Caco-2 (cell line): ENCODE measurements at regions of chr7 and their contacts with region 1.

Region 1: DNA sequence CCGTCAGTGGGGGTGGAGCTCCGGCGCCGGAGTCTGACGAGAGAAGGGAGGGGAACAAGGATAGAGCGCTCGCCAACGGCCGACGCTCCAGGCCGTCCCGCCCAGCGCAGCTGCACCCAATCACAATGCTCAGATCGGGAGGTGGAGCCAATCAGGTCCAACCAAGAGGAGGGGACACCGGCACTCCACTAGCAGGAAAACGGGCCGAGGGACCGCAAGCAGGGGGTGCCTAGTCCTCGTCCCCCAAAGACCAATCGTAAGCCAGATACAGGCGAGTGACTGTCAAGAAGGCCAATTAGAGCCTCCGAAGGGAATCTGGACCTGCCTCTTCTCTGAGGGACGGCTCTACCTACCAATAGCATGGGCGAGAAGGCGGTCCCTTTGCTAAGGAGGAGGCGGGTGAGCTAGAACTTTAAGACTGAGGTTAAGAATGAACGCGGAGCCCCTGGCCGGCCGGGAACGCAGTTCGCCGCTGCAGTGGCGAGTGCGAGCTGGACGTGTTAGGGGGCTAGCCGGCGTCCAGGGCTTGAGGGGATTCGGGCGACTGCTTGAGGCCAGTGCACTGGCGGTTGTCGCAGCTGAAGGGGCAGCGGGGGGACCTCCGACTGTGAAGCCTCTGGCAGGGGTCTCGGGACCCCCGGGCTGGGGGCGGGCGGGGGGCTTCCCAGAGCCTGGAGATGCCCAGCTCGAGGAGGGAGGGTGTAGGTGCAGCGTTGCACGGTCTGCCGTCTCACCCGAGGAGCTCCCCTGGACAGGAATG is at the start of gene FBXO24:
- DNase-seq: peak; percentile 100
- H3K4me3 ChIP-seq: peak within 1 kb of the TSS; percentile 74
- H3K4me3 Mint-ChIP-seq: peak within 1 kb of the TSS; percentile 86
- H3K27ac Mint-ChIP-seq: peak within 1 kb of the TSS; percentile 93
- H3K4me1 ChIP-seq: peaks cover 13% of the 10 kb centered on the region
- H3K4me1 Mint-ChIP-seq: peaks cover 11% of the 10 kb centered on the region
- H3K27me3 ChIP-seq: no peaks in the 10 kb centered on the region
- H3K27me3 Mint-ChIP-seq: no peaks in the 10 kb centered on the region
- CTCF ChIP-seq: no peak
- total RNA-seq, gene FBXO24: 1.4 and 1.5 TPM in 2 replicates

Region 2: DNA sequence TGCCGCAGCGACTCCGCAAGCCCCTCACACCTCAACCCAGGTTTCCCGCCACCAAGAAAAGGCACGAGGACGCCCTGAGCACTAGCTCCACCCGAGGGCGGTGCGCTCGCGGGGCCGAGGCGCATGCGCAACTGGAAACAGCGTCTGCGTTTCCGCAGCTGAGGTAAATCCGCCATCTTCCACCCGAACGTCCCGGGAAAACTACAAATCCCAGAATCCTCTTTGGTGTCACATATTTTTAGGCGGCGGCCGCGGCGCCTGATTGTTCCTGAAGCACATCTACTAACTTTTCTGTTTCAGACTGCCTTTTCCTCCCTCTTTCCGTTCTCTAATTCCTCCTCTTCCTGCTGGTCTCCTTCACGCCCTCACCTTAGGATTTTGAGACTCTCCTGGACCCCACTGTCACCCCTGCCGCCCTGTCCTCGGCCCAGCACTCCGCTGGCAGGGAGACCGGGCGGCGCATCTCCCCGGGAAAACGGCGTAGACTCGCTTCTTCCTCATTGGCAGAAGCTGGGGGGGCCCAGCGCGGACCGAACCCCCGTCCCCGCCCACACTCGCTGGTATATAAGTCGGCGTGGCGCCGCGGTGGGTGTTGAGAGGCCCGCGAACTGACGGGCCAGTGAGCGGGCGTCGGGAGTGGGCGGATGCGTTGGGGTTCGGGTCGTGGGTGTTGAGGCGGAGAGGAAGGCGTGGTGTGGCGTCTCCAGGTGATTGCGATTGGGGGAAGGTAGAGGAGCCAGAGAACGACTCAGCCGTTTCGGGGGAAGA is 158.1 kb before region 1 on chr7 and contains the start of gene ZCWPW1:
- CTCF ChIA-PET with region 1: no interaction called
- POLR2A ChIA-PET with region 1: interaction called, 24 read pairs
- intact Hi-C with region 1: no loop called
- DNase-seq: peak; percentile 96 to 97
- H3K4me3 ChIP-seq: peak within 1 kb of the TSS; percentile 88
- H3K4me3 Mint-ChIP-seq: peak within 1 kb of the TSS; percentile 89
- H3K27ac Mint-ChIP-seq: peak within 1 kb of the TSS; percentile 99
- H3K4me1 ChIP-seq: 0 out of 2 replicates have a peak, but pooled peaks cover 10% of the 10 kb centered on the region
- H3K4me1 Mint-ChIP-seq: peaks cover 7% of the 10 kb centered on the region
- H3K27me3 ChIP-seq: no peaks in the 10 kb centered on the region
- H3K27me3 Mint-ChIP-seq: peaks cover 4% of the 10 kb centered on the region
- CTCF ChIP-seq: no peak
- total RNA-seq, gene ZCWPW1: 3.4 and 4.4 TPM in 2 replicates

Region 3: DNA sequence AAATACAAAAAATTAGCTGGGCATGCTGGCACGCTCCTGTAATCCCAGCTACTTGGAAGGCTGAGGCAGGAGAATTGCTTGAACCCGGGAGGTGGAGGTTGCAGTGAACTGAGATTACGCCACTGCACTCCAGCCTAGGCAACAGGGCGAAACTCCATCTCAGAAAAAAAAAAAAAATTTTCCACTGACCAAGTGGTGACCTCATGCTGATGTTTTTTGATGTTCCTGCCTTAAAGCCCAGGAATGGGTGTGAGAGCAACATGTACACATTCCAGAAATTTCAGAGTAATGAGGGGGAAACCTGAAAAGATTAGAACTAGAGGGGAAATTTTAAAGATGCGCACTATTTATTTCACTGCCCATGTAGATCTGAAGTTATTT is 83.1 kb before region 1 on chr7:
- CTCF ChIA-PET with region 1: no interaction called
- POLR2A ChIA-PET with region 1: interaction called, 12 read pairs
- intact Hi-C with region 1: no loop called
- DNase-seq: peak in 1 of 2 experiments; percentile 59
- H3K4me3 ChIP-seq: no peak overlapping the region
- H3K4me3 Mint-ChIP-seq: peak overlapping the region; percentile 3
- H3K27ac Mint-ChIP-seq: peak overlapping the region; percentile 78
- H3K4me1 ChIP-seq: peaks cover 27% of the 10 kb centered on the region
- H3K4me1 Mint-ChIP-seq: peaks cover 14% of the 10 kb centered on the region
- H3K27me3 ChIP-seq: no peaks in the 10 kb centered on the region
- H3K27me3 Mint-ChIP-seq: no peaks in the 10 kb centered on the region
- CTCF ChIP-seq: no peak

Region 4: DNA sequence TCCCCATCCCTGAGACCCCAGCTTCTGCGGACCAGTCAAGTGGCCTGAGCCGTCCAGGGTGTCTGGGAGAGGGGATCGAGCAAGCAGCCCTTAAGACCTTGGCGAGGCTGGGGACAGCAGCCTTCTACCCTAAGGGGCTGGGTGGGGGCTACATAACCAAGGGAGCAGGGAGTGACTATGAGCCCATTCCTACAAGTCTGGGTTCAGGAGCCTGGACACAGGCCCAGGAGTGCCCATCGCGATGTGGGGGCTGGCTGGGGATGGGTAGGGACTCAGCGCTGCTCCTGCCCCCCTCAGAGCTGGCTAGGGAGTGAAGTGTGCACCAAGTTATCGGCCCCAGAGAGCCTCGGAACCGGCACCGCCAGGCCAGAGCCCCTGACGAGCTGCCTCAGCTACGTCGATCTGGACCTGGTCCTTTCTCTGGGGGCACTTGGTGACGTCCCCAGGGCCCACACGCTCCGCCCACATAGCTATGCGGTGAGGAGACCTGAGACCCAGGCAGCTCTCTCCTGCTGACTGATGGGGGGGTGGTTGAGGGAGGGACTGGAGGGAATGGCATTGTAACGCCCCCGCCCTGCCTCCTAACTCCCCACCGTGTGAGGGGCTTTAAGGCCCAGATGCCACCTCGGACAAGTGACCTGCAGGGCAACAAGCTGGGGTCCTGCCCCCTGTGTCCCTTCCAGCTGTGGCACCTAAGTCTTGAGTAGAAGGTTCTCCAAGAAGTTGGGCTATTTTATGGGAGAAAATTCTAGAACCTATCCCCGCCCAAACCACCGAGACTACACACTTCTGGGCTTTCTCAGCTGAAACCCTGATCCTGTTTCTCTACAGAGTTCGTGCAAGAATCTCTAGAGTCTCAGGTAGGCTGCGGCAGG is 15.3 kb before region 1 on chr7:
- CTCF ChIA-PET with region 1: interaction called, 7 read pairs
- POLR2A ChIA-PET with region 1: interaction called, 22 read pairs
- intact Hi-C with region 1: no loop called
- DNase-seq: peak in 1 of 2 experiments; percentile 53
- H3K4me3 ChIP-seq: no peak overlapping the region
- H3K4me3 Mint-ChIP-seq: no peak overlapping the region
- H3K27ac Mint-ChIP-seq: peak overlapping the region; percentile 85
- H3K4me1 ChIP-seq: peaks cover 32% of the 10 kb centered on the region
- H3K4me1 Mint-ChIP-seq: peaks cover 15% of the 10 kb centered on the region
- H3K27me3 ChIP-seq: no peaks in the 10 kb centered on the region
- H3K27me3 Mint-ChIP-seq: no peaks in the 10 kb centered on the region
- CTCF ChIP-seq: peak in 1 of 2 experiments; percentile 2

Region 5: DNA sequence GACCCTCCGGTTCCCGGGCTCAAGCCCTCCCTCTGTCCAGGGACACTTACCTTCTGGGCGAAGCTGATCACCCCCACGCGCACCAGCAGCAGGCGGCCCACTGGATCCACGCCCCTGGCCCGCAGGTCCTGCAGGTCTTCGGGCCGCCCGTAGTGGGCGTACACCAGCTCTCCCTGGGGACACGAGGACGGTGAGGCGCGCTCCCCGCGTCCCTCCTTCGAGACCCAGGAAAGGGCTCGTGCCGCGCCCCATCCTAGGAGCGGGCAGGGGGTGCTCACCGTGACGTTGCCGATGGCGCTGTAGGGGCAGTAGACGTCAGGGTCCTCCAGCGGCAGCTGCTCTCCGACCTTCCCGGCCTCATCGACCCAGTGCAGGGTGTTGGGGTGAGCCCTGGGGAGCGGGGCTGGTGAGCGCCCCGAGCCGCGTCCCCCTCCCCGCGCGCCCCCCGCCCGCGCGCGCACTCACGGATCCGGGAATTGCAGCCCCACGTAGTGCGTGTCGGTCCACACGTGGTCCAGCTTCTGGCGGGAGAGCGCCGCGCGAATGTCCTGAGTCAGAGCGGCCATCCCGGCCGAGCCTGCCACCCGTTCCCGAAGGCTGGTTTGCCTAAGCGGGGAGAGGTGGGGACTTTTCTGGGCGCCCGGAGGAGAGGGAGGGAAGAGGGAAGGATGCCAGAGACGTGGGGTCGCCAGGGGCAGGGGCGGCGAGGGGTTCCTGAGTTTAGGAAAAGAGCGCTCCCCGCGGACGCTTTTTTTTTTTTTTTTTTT is 46.7 kb after region 1 on chr7:
- CTCF ChIA-PET with region 1: interaction called, 16 read pairs
- POLR2A ChIA-PET with region 1: interaction called, 15 read pairs
- intact Hi-C with region 1: no loop called
- DNase-seq: peak; percentile 85 to 86
- H3K4me3 ChIP-seq: peak overlapping the region; percentile 52
- H3K4me3 Mint-ChIP-seq: peak overlapping the region; percentile 79
- H3K27ac Mint-ChIP-seq: peak overlapping the region; percentile 92
- H3K4me1 ChIP-seq: no peaks in the 10 kb centered on the region
- H3K4me1 Mint-ChIP-seq: no peaks in the 10 kb centered on the region
- H3K27me3 ChIP-seq: no peaks in the 10 kb centered on the region
- H3K27me3 Mint-ChIP-seq: no peaks in the 10 kb centered on the region
- CTCF ChIP-seq: peak; percentile 67 to 70

Region 6: GRCh38 chr7:100736671-100737070 is 150.2 kb after region 1 on chr7:
- CTCF ChIA-PET with region 1: no interaction called
- POLR2A ChIA-PET with region 1: no interaction called
- intact Hi-C with region 1: no loop called
- DNase-seq: no peak
- H3K4me3 ChIP-seq: no peak overlapping the region
- H3K4me3 Mint-ChIP-seq: no peak overlapping the region
- H3K27ac Mint-ChIP-seq: no peak overlapping the region
- H3K4me1 ChIP-seq: no peaks in the 10 kb centered on the region
- H3K4me1 Mint-ChIP-seq: no peaks in the 10 kb centered on the region
- H3K27me3 ChIP-seq: no peaks in the 10 kb centered on the region
- H3K27me3 Mint-ChIP-seq: peaks cover 3% of the 10 kb centered on the region
- CTCF ChIP-seq: no peak

Region 7: GRCh38 chr7:100852048-100852872 is 265.8 kb after region 1 on chr7 and contains the start of gene SLC12A9:
- CTCF ChIA-PET with region 1: interaction called, 3 read pairs
- POLR2A ChIA-PET with region 1: interaction called, 5 read pairs
- intact Hi-C with region 1: loop called (anchors 2 kb)
- DNase-seq: peak; percentile 93 to 95
- H3K4me3 ChIP-seq: peak within 1 kb of the TSS; percentile 74
- H3K4me3 Mint-ChIP-seq: peak within 1 kb of the TSS; percentile 79
- H3K27ac Mint-ChIP-seq: peak within 1 kb of the TSS; percentile 66
- H3K4me1 ChIP-seq: peaks cover 9% of the 10 kb centered on the region
- H3K4me1 Mint-ChIP-seq: peaks cover 15% of the 10 kb centered on the region
- H3K27me3 ChIP-seq: no peaks in the 10 kb centered on the region
- H3K27me3 Mint-ChIP-seq: no peaks in the 10 kb centered on the region
- CTCF ChIP-seq: peak; percentile 89 to 97
- total RNA-seq, gene SLC12A9: 59.0 and 60.7 TPM in 2 replicates

Region 8: GRCh38 chr7:101426303-101427011 is 840.0 kb after region 1 on chr7:
- CTCF ChIA-PET with region 1: no interaction called
- POLR2A ChIA-PET with region 1: no interaction called
- intact Hi-C with region 1: no loop called
- DNase-seq: no peak
- H3K4me3 ChIP-seq: no peak overlapping the region
- H3K4me3 Mint-ChIP-seq: no peak overlapping the region
- H3K27ac Mint-ChIP-seq: no peak overlapping the region
- H3K4me1 ChIP-seq: 0 out of 2 replicates have a peak, but pooled peaks cover 4% of the 10 kb centered on the region
- H3K4me1 Mint-ChIP-seq: no peaks in the 10 kb centered on the region
- H3K27me3 ChIP-seq: no peaks in the 10 kb centered on the region
- H3K27me3 Mint-ChIP-seq: no peaks in the 10 kb centered on the region
- CTCF ChIP-seq: no peak